ENCODE measurements at regions of chr6 and their contacts with region 1.

Region 1: DNA sequence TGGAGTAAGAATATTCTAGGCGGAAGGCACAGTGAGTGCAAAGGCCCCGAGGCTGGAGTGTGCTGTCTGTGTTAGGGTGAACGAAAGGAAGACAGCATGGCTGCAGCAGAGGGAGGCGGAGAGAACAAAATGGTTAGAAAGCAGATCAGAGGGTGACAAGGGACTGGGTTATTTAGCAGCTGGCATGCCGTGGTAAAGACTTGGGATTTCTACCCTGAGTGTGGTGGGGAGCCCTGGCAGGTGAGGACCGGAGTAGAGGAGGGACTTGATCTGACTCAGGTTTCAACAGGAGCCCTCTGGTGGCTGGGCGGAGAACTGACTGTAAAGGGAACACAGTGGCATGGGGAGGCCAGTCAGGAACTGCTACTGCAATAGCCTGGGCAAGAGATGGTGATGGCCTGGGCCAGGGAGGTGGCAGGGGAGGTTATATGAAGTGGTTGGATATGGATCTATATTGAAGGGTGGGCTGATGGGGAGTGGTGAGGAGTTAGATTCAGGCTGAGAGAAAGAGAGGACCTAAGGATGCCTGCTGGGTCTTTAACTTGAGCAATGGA is 38.0 kb downstream of the PIM1 start:
- DNase-seq: peak; percentile 87 to 97
- H3K4me3 ChIP-seq: no peak overlapping the region
- H3K27ac ChIP-seq: no peak overlapping the region
- H3K4me1 ChIP-seq: no peaks in the 10 kb centered on the region; a peak in 1 of 7 replicates
- H3K27me3 ChIP-seq: no peaks in the 10 kb centered on the region
- CTCF ChIP-seq: peak; percentile 87 to 94 (median 94)
- EP300 ChIP-seq: no peak
- POLR2A ChIP-seq: no peak
- RAD21 ChIP-seq: peak; percentile 84

Region 2: GRCh38 chr6:36885461-36886401 is 322.2 kb before region 1 on chr6 and contains the start of gene C6orf89:
- CTCF ChIA-PET with region 1: interaction called, 16 read pairs
- POLR2A ChIA-PET with region 1: no interaction called
- DNase-seq: peak; percentile 95 to 97
- H3K4me3 ChIP-seq: peak within 1 kb of the TSS; percentile 47 to 81 (median 70)
- H3K27ac ChIP-seq: peak within 1 kb of the TSS; percentile 24; the same call in 1 of the 2 replicates
- H3K4me1 ChIP-seq: no peaks in the 10 kb centered on the region; a peak in 1 of 7 replicates
- H3K27me3 ChIP-seq: no peaks in the 10 kb centered on the region
- CTCF ChIP-seq: peak; percentile 72 to 87 (median 82)
- EP300 ChIP-seq: 0 out of 3 replicates have a peak, but pooled peaks of 1 of the 2 experiments have one; percentile 10
- POLR2A ChIP-seq: no peak
- RAD21 ChIP-seq: peak; percentile 32 to 47; a peak in 3 of 4 replicates
- total RNA-seq, gene C6orf89: 11.6 and 12.3 TPM in 2 replicates

Region 3: DNA sequence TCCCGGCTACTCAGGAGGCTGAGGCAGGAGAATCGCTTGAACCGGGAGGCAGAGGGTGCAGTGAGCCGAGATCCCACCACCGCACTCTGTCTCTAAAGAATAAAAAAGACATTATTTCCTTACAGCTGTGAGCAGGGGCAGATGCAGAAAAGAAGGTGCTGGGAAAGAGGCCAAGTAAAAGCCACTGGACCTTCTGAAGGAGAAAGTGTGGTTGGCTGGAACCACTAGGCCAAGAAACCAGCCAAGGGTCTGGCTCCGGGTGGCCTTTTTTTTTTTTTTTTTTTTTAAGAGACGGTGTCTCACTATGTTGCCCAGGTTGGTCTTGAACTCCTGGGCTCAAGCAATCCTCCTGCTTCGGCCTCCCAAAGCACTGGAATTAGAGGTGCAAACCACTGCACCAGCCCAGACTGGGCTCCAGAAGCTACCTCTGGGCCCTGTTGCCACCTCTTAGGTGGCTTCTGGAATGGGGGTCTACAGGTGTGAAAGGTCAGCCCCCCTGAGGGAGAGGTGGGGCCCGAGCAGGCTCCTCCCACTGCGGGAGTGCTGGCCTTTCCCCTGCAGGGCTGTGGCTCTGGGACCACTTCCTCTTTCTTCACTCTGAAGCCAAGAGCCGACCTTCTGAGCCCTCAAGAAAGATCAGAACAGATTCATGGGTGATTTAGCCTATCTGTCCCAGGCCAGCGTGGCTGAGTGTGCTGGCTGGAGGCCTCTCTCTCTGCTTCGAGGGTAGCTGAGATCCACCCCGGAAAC is 202.7 kb before region 1 on chr6 and contains the start of gene FGD2:
- CTCF ChIA-PET with region 1: interaction called, 18 read pairs
- POLR2A ChIA-PET with region 1: interaction called, 3 read pairs
- DNase-seq: no peak
- H3K4me3 ChIP-seq: no peak within 1 kb of the TSS
- H3K27ac ChIP-seq: no peak within 1 kb of the TSS; the same call in 1 of the 2 replicates
- H3K4me1 ChIP-seq: no peaks in the 10 kb centered on the region
- H3K27me3 ChIP-seq: no peaks in the 10 kb centered on the region
- CTCF ChIP-seq: no peak
- EP300 ChIP-seq: no peak
- POLR2A ChIP-seq: no peak
- RAD21 ChIP-seq: no peak
- total RNA-seq, gene FGD2: 0.19 and 0.32 TPM in 2 replicates

Region 4: GRCh38 chr6:37038292-37039198 is 169.4 kb before region 1 on chr6:
- CTCF ChIA-PET with region 1: interaction called, 32 read pairs
- POLR2A ChIA-PET with region 1: no interaction called
- DNase-seq: no peak
- H3K4me3 ChIP-seq: no peak overlapping the region
- H3K27ac ChIP-seq: no peak overlapping the region
- H3K4me1 ChIP-seq: no peaks in the 10 kb centered on the region
- H3K27me3 ChIP-seq: no peaks in the 10 kb centered on the region
- CTCF ChIP-seq: no peak
- EP300 ChIP-seq: no peak
- POLR2A ChIP-seq: no peak
- RAD21 ChIP-seq: no peak

Region 5: GRCh38 chr6:37169496-37170272 is 38.3 kb before region 1 on chr6 and contains the start of gene PIM1:
- CTCF ChIA-PET with region 1: interaction called, 26 read pairs
- POLR2A ChIA-PET with region 1: interaction called, 9 read pairs
- DNase-seq: peak; percentile 92 to 93
- H3K4me3 ChIP-seq: peak within 1 kb of the TSS; percentile 92 to 99 (median 94)
- H3K27ac ChIP-seq: peak within 1 kb of the TSS; percentile 97
- H3K4me1 ChIP-seq: peaks cover 6 to 14% (median 10%) of the 10 kb centered on the region in 4 experiments; a peak in 5 of 7 replicates
- H3K27me3 ChIP-seq: no peaks in the 10 kb centered on the region
- CTCF ChIP-seq: no peak
- EP300 ChIP-seq: peak in 1 of 2 experiments; percentile 54; a peak in 1 of 3 replicates
- POLR2A ChIP-seq: peak in 1 of 2 experiments; percentile 65
- RAD21 ChIP-seq: no peak
- total RNA-seq, gene PIM1: 94.1 and 94.9 TPM in 2 replicates

Region 6: GRCh38 chr6:37182736-37183590 is 25.0 kb before region 1 on chr6:
- CTCF ChIA-PET with region 1: interaction called, 34 read pairs
- POLR2A ChIA-PET with region 1: no interaction called
- DNase-seq: no peak
- H3K4me3 ChIP-seq: no peak overlapping the region
- H3K27ac ChIP-seq: no peak overlapping the region
- H3K4me1 ChIP-seq: no peaks in the 10 kb centered on the region
- H3K27me3 ChIP-seq: no peaks in the 10 kb centered on the region
- CTCF ChIP-seq: no peak
- EP300 ChIP-seq: no peak
- POLR2A ChIP-seq: no peak
- RAD21 ChIP-seq: no peak

Region 7: DNA sequence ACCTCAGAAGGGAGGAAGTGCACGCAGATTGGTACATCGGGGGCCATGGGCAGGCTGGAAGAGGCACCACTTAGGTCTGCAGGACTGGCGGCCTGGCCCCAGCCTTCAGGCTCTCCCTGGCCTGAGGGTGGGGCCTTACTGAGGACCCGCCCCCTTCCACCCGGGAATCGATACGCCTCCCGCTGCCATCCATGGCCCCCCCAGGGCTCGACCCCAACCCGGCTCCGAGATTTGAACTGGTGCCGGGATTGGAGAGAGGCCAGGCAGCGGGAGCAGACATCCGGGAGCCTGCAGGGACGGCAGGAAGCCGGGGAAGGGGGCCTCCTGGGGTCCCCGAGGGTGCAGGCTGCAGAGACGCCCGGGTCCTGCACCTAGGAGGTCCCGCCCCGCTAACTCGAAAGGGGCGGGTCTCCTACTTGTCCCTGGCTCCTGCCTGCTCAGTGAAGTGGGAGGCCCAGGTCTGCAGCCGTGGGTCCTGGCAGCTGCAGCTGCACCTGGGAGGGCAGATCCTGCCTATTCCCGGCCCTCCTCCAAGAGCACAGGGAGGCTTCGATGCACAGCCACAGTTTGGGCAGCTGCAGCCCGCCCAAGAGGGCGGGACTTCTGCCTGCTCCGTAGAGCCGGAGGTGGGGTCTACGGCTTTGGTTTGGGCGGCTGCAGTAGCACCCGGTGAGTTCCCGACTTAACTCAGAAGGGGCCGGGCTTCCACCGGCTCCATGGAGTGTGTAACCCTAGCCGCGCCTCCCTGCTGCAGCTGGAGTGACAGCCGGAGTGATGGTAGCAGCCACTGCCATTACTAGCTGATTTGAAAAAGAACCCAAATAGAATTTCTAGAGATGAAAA is 14.4 kb after region 1 on chr6:
- CTCF ChIA-PET with region 1: interaction called, 55 read pairs
- POLR2A ChIA-PET with region 1: interaction called, 3 read pairs
- DNase-seq: peak; percentile 88 to 95
- H3K4me3 ChIP-seq: peak overlapping the region; percentile 43 to 68 (median 58)
- H3K27ac ChIP-seq: peak overlapping the region; percentile 23; the same call in 1 of the 2 replicates
- H3K4me1 ChIP-seq: no peaks in the 10 kb centered on the region; a peak in 1 of 7 replicates
- H3K27me3 ChIP-seq: no peaks in the 10 kb centered on the region
- CTCF ChIP-seq: no peak
- EP300 ChIP-seq: no peak
- POLR2A ChIP-seq: no peak; a peak in 2 of 3 replicates
- RAD21 ChIP-seq: peak in 1 of 2 experiments; percentile 4; a peak in 1 of 4 replicates

Region 8: DNA sequence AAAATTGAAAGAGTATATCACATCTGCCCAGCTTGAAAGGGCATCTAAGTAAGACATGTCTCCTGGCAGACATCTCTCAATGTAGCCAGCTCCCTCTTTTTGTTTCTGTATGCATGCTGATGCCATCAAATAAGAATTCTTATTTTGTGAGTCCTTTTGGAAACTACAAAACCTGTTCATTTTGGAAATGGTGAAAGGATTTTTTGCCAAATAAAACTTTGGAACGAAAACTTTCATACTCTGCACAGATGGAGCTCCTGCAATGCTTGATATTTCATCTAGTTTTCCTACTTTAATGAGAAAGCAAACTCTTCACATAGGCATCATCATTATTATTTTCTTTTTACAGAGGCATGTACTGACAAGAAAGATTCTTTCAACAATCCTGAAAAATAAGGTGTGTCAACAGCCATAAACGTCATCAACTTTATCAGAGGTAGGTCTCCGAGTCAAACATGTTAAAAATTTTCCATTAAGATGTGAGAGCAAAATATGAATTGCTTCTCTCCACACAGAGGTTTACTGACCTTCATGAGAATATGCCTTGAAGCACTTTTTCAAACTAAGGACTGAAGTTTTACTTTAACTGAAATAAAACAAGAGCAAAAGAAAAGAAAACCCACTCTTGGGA is 198.9 kb after region 1 on chr6:
- CTCF ChIA-PET with region 1: no interaction called
- POLR2A ChIA-PET with region 1: no interaction called
- DNase-seq: no peak
- H3K4me3 ChIP-seq: no peak overlapping the region
- H3K27ac ChIP-seq: no peak overlapping the region
- H3K4me1 ChIP-seq: no peaks in the 10 kb centered on the region
- H3K27me3 ChIP-seq: no peaks in the 10 kb centered on the region
- CTCF ChIP-seq: no peak
- EP300 ChIP-seq: no peak
- POLR2A ChIP-seq: no peak
- RAD21 ChIP-seq: no peak